Lower leg skin (tissue), 4 donors: ENCODE measurements at regions of chr12 and their contacts with region 1.

Region 1: DNA sequence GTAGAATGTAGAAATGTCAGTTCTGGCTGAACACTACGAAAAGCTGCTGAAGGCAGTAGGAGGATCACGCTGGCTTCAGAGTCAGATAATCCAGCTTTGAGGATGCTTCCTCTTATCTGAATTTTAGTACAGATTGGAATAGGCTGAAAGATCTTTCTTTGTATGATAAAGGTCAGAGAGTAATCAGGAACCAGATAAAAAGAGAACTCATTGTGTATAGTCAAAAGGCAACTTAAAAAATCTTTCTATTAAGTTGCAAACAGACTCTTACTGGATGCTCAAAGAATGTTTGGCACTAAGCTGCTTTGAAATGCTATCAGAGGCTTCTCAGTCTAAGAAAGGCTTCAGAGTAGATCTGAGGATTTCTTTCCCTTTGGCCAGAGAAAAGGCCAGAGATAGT is 21.8 kb upstream of the TRHDE start:
- DNase-seq: no peak
- H3K4me3 ChIP-seq: no peak overlapping the region
- CTCF ChIP-seq: no peak
- POLR2A ChIP-seq: no peak

Region 2: DNA sequence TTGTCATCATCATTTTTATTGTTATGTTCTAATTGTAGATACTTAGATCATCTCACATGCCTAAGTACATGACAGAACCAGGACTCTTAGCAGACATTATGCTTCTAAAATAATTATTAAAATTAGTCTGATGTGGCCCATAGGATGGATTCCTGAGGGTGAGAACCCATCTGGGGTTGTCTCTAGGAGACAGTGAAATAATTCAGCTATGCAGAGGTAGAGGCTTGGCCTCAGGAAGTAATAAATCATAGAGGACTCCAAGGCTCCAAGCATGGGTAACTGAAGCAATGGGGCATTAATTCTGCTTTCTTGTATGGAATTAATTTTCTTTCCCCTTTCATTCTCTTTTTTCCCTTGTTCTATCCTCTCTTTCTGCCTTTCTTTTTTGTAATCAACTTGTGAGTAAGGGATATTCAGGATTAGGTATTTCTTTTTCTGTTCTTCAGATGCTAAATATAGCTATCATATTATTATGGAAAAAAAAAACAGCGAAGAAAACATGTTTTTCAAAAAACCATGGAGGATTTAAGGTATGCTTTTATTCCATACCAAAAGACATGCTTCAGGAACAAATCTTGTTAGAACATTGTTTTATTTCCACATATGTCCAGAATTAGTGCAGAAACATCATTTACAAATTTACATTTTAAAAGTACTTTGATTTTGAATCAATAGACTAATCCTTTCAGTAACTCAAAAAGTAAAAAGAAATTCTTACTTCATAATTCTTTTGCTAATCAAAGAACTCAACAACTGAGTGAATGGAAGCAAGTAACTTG is 285.1 kb after region 1 on chr12:
- intact Hi-C with region 1: loop called (anchors 5 kb)
- DNase-seq: no peak
- H3K4me3 ChIP-seq: no peak overlapping the region
- CTCF ChIP-seq: no peak
- POLR2A ChIP-seq: no peak